ENCODE measurements at regions of chr10 and their contacts with region 1.

Region 1: GRCh38 chr10:59227136-59227673 is 50.8 kb downstream of the PHYHIPL start:
- H3K4me3 Mint-ChIP-seq: no peak overlapping the region
- H3K27ac Mint-ChIP-seq: no peak overlapping the region
- H3K4me1 Mint-ChIP-seq: no peaks in the 10 kb centered on the region
- H3K27me3 Mint-ChIP-seq: no peaks in the 10 kb centered on the region

Region 2: DNA sequence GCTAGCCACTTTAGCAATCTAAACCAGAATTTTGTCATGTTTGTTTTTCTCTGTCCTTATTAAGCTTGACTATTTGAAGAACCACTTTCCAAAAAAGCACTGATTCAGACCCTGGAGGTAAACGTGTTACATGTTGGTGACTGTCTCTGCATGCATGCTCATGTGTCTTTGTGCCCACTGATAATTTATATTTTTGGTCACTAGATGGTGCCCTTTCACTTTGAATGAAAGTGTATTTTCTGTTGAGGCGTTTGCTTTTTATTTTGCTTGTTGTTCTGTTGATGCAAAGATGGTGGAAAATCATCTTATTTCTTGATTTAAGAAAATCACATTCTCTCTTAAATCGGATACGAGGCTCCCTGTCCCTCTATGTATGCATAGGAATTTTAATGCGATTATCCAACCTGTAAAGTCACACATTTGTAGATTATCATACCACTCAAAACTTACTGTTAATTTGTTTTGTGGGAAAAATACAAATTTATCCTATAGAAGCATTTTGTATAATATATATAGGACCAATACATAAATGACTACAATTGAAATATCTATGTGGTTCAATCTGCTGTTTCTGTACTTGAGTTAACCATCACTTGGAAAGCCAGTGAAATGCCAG is 445.2 kb before region 1 on chr10:
- intact Hi-C with region 1: loop called (anchors 10 kb)
- H3K4me3 Mint-ChIP-seq: no peak overlapping the region
- H3K27ac Mint-ChIP-seq: no peak overlapping the region
- H3K4me1 Mint-ChIP-seq: no peaks in the 10 kb centered on the region
- H3K27me3 Mint-ChIP-seq: no peaks in the 10 kb centered on the region